Aorta (tissue), 5 donors: ENCODE measurements at regions of chr5 and their contacts with region 1.

Region 1: DNA sequence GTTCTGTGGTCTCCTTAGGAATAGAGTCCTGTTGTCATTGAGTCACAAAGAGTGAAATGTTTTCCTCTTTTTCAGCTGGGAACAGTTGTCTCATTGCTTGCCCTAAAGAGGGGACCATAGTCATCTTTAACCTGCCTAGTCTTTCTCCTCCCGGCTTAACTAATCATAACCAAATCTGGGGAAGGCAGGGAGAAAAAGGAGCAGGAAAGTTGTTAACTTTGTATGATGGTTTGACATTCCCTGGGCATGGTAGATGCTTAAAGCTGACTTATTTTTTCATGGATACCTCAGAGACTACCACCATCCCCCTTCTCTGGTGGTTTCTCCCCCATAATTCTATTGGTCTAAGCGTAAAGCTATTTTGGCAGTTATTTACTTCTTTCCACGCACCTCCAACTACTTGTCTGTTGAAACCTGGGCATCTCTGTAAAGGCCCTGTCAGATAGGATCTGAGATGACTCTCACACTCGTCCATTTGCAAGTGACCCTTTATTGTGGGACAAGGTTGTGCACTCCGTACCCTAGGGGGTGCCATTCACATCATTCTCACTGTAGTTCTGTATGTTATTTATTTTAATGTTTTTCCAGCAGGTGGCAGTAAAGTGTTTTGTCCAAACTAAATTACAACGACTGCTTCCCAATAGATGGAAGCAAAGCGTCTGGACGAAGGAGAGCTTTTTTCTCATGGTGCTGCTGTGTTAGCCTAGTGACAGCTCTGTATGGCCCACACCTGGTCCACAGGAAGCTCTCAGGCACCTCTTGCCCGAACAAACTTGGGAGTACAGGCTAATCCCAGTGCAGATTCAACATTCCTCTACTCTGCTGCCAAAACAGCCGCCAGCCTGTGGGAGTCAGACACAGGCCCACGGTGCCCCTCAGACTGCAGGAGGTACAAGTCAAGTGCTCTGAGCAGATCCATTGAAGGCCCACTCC is 3.0 kb upstream of the FAM13B start:
- DNase-seq: peak in 1 of 2 donors; percentile 51
- ATAC-seq: peak; percentile 75
- H3K4me3 ChIP-seq: no peak overlapping the region
- H3K27ac ChIP-seq: peak overlapping the region in 1 of 2 donors; percentile 49
- H3K4me1 ChIP-seq: peaks cover 0 to 4% of the 10 kb centered on the region in 2 donors
- H3K27me3 ChIP-seq: no peaks in the 10 kb centered on the region

Region 2: GRCh38 chr5:138069068-138069600 is 33.3 kb after region 1 on chr5:
- intact Hi-C with region 1: loop called in 1 of 2 experiments (anchors 2 kb)
- DNase-seq: no peak
- ATAC-seq: no peak
- H3K4me3 ChIP-seq: no peak overlapping the region
- H3K27ac ChIP-seq: no peak overlapping the region
- H3K4me1 ChIP-seq: no peaks in the 10 kb centered on the region
- H3K27me3 ChIP-seq: no peaks in the 10 kb centered on the region

Region 3: GRCh38 chr5:138083702-138084101 is 47.8 kb after region 1 on chr5 and contains the start of gene WNT8A:
- intact Hi-C with region 1: no loop called
- DNase-seq: no peak
- ATAC-seq: no peak
- H3K4me3 ChIP-seq: no peak within 1 kb of the TSS
- H3K27ac ChIP-seq: no peak within 1 kb of the TSS
- H3K4me1 ChIP-seq: no peaks in the 10 kb centered on the region
- H3K27me3 ChIP-seq: no peaks in the 10 kb centered on the region
- total RNA-seq, gene WNT8A: not detected

Region 4: DNA sequence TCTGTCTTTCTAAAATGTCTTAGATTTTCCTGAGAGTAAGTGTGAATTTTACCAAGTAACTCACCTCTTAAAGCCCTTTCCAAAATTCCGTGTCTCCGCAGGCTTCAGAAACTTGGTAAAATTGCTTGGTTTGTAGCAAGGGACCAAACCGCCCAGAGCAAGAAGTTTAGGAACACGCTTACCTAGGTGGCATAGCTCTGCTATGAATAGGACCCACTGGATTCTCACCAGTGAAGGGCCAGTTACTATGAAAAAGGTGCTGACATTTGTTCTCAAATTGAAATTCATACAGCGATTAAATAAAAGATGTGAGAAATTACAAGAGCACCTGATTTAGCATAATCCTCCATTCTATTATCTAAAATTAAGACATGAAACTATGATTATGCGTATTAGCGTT is 96.7 kb after region 1 on chr5:
- intact Hi-C with region 1: loop called in 1 of 2 experiments (anchors 5 kb)
- DNase-seq: no peak
- ATAC-seq: no peak
- H3K4me3 ChIP-seq: no peak overlapping the region
- H3K27ac ChIP-seq: no peak overlapping the region
- H3K4me1 ChIP-seq: no peaks in the 10 kb centered on the region
- H3K27me3 ChIP-seq: no peaks in the 10 kb centered on the region